Gastrocnemius medialis (tissue), 4 donors: ENCODE measurements at regions of chr5 and their contacts with region 1.

Region 1: GRCh38 chr5:156815988-156816599 is 34.0 kb upstream of the PPP1R2B start:
- DNase-seq: no peak
- ATAC-seq: peak in 1 of 2 donors; percentile 60
- H3K4me3 ChIP-seq: no peak overlapping the region
- H3K27ac ChIP-seq: no peak overlapping the region
- H3K4me1 ChIP-seq: no peaks in the 10 kb centered on the region
- H3K27me3 ChIP-seq: no peaks in the 10 kb centered on the region
- CTCF ChIP-seq: peak in 4 of 5 experiments; percentile 24 to 55 (median 36)
- POLR2A ChIP-seq: no peak

Region 2: DNA sequence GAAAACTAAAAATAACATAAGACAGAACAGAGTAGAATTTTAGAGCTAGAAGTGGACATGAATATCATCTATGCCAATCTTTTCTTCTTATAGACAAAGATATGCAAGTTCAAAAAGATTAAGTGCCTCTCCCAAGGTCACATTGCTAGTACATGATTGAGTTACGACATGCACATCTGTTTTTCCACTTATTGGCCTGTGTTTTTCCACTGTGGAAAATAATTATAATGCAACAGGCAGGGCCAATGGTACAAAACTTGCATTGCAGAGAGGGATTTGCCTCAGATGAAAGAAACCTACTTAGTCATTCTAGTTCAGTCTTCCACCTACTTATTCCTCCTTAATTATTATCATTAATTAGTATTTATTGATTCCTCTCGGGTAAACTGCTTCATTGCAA is 897.0 kb before region 1 on chr5:
- in situ Hi-C with region 1: no loop called
- intact Hi-C with region 1: no loop called
- DNase-seq: no peak
- ATAC-seq: no peak
- H3K4me3 ChIP-seq: no peak overlapping the region
- H3K27ac ChIP-seq: no peak overlapping the region
- H3K4me1 ChIP-seq: peaks cover 0 to 18% of the 10 kb centered on the region in 2 donors
- H3K27me3 ChIP-seq: no peaks in the 10 kb centered on the region
- CTCF ChIP-seq: no peak
- POLR2A ChIP-seq: no peak

Region 3: GRCh38 chr5:156312897-156313694 is 503.0 kb before region 1 on chr5:
- in situ Hi-C with region 1: loop called in 1 of 4 experiments (anchors 25 kb)
- intact Hi-C with region 1: no loop called
- DNase-seq: no peak
- ATAC-seq: no peak
- H3K4me3 ChIP-seq: no peak overlapping the region
- H3K27ac ChIP-seq: no peak overlapping the region
- H3K4me1 ChIP-seq: no peaks in the 10 kb centered on the region
- H3K27me3 ChIP-seq: no peaks in the 10 kb centered on the region
- CTCF ChIP-seq: no peak
- POLR2A ChIP-seq: no peak

Region 4: DNA sequence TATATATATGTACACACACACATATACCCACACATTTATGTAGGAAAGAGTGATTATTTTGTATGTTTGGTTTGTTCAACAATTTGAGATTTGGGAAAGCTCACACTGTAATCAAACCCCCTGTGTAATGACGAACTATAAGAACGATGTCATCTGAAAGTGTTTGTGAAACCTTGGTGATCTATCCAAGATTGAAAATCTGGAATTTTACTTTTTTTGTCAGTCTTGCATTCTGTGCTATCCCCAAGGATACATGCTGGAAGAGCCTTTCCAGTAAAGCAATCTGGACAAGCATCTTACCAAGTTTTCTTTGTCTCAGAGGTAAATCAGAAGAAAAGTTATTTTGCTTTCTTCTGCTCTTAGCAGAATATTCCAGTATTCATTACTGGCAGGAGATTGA is 465.8 kb before region 1 on chr5:
- in situ Hi-C with region 1: no loop called
- intact Hi-C with region 1: no loop called
- DNase-seq: no peak
- ATAC-seq: no peak
- H3K4me3 ChIP-seq: no peak overlapping the region
- H3K27ac ChIP-seq: peak overlapping the region in 1 of 4 donors; percentile 35
- H3K4me1 ChIP-seq: peaks cover 29 to 44% of the 10 kb centered on the region in 2 donors
- H3K27me3 ChIP-seq: no peaks in the 10 kb centered on the region
- CTCF ChIP-seq: no peak
- POLR2A ChIP-seq: no peak

Region 5: DNA sequence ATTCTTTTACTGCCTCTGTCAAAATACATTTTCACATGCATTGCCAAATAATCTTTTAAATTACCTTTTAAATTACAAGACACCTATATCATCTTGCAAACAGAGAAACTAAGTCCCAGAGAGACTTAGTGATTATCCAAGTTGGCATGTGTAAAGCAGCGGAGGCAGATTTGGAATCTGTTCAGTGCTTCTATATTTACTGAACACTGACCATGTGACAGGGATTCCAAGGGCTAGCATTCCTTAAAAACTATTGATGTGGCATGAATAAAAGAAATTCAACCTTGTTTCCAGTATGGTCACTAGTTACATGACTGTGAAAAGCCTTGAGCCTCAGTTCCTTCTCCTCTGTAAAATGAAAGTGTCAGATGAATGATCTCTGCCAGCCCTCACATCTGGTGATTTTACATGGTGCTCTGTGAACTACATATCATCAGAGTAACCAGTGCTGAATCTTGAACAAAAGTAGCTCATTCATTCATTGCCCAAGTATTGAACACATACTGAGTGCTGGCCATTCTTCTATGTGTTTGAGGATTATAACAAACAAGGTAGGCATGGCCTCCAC is 37.9 kb before region 1 on chr5:
- in situ Hi-C with region 1: no loop called
- intact Hi-C with region 1: no loop called
- DNase-seq: no peak
- ATAC-seq: no peak
- H3K4me3 ChIP-seq: no peak overlapping the region
- H3K27ac ChIP-seq: no peak overlapping the region
- H3K4me1 ChIP-seq: peaks cover 0 to 3% of the 10 kb centered on the region in 2 donors
- H3K27me3 ChIP-seq: no peaks in the 10 kb centered on the region
- CTCF ChIP-seq: no peak
- POLR2A ChIP-seq: no peak